ENCODE measurements at regions of chr19 and their contacts with region 1.

Region 1: GRCh38 chr19:49118565-49119410 is at the start of gene C19orf73:
- DNase-seq: peak; percentile 94
- H3K4me3 Mint-ChIP-seq: peak within 1 kb of the TSS; percentile 86
- H3K27ac Mint-ChIP-seq: peak within 1 kb of the TSS; percentile 85
- H3K4me1 Mint-ChIP-seq: peaks cover 34% of the 10 kb centered on the region
- H3K27me3 Mint-ChIP-seq: peaks cover 17% of the 10 kb centered on the region
- total RNA-seq, gene C19orf73: 2.6 and 2.9 TPM in 2 replicates

Region 2: DNA sequence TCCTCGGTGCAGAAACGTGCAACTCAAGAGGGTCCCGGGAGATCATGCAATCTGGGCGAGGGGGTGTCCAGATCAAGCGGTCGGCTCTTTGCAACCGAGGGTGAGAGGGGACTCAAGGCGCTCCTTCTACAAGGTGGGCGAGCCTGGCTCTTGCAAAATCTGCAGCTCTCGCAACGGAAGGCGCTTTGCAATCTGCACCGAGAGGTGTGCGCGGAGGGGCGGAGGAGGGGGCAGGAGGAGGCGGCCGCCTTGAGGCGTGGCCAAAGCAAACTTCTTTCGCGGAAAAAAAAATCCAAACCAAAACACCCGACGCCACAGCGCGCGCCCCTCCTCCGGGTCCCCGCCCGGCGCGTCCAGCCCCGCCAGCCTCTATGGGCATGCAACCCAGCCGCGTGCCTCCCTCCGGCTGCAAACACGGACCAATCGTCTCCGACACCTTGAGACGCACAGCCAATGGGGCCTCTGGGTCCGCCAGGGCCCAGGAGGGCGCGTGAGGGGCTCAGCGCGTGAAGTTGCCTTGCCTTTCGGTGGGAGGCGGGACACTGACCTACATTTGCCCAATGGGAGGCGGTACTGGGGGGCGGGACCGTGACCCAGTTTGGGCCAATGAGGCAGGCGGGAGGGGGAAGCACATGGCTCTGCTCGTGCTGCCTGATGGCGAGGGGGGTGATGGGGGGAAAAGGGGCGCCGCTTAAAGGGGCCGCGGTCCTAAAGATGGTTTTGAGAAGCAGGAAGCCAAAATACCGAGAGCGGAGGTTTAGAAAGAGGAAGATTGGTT is 481.4 kb before region 1 on chr19 and contains the start of gene DBP:
- intact Hi-C with region 1: loop called (anchors 10 kb)
- DNase-seq: peak; percentile 98
- H3K4me3 Mint-ChIP-seq: peak within 1 kb of the TSS; percentile 97
- H3K27ac Mint-ChIP-seq: peak within 1 kb of the TSS; percentile 100
- H3K4me1 Mint-ChIP-seq: peaks cover 29% of the 10 kb centered on the region
- H3K27me3 Mint-ChIP-seq: peaks cover 4% of the 10 kb centered on the region
- total RNA-seq, gene DBP: 8.5 and 9.1 TPM in 2 replicates

Region 3: GRCh38 chr19:48720613-48721296 is 398.0 kb before region 1 on chr19:
- intact Hi-C with region 1: loop called (anchors 10 kb)
- DNase-seq: peak; percentile 91
- H3K4me3 Mint-ChIP-seq: peak overlapping the region; percentile 92
- H3K27ac Mint-ChIP-seq: peak overlapping the region; percentile 98
- H3K4me1 Mint-ChIP-seq: peaks cover 23% of the 10 kb centered on the region
- H3K27me3 Mint-ChIP-seq: no peaks in the 10 kb centered on the region

Region 4: GRCh38 chr19:49085020-49085867 is 33.5 kb before region 1 on chr19 and contains the start of gene SNRNP70:
- intact Hi-C with region 1: loop called (anchors 1 kb)
- DNase-seq: peak; percentile 99
- H3K4me3 Mint-ChIP-seq: peak within 1 kb of the TSS; percentile 99
- H3K27ac Mint-ChIP-seq: peak within 1 kb of the TSS; percentile 80
- H3K4me1 Mint-ChIP-seq: peaks cover 25% of the 10 kb centered on the region
- H3K27me3 Mint-ChIP-seq: peaks cover 2% of the 10 kb centered on the region
- total RNA-seq, gene SNRNP70: 259 and 272 TPM in 2 replicates

Region 5: DNA sequence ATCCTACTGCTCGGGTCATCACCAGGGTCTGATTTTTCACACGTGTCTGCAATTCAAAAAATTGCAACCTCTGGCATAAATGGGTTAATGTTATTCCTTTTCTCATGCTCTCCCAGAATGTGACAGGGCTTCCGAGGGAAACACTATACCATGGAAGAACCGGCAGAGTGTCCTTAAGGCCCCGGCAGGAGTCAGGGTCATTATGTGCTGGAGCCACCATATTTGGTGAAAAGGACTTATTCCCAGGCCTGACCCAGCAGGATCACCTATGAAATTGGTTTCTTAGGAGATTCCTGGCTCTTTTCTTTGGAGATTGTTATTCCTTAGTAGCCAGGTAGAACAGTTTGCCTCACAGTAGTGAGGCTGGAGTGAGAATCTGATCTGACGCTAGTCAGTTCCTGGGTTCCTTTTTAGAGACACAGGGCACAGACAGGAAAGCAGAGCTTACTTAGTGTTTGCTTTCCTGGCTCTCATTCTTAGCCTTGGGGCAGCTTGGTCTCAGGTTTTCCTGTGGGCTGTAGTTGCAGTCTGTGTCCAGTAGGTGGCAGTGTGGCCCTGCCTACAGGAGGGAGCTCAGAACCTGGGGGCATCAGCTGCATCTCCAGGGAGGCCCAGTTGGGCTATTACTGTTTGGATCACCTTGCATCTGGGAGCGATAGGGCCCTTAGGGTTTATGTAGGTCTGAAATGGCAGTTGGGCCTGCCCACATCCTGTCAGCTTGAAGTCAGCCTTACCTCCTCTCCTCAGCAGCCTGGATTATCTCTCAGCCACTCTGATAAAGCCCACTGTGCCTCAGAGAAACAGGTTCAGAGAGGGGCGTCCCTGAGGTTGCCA is 21.1 kb before region 1 on chr19:
- intact Hi-C with region 1: loop called (anchors 1 kb)
- DNase-seq: peak; percentile 68
- H3K4me3 Mint-ChIP-seq: no peak overlapping the region
- H3K27ac Mint-ChIP-seq: no peak overlapping the region
- H3K4me1 Mint-ChIP-seq: peaks cover 15% of the 10 kb centered on the region
- H3K27me3 Mint-ChIP-seq: no peaks in the 10 kb centered on the region

Region 6: GRCh38 chr19:49148784-49149651 is 30.2 kb after region 1 on chr19:
- intact Hi-C with region 1: loop called (anchors 2 kb)
- DNase-seq: peak; percentile 70
- H3K4me3 Mint-ChIP-seq: peak overlapping the region; percentile 78
- H3K27ac Mint-ChIP-seq: no peak overlapping the region
- H3K4me1 Mint-ChIP-seq: peaks cover 35% of the 10 kb centered on the region
- H3K27me3 Mint-ChIP-seq: peaks cover 59% of the 10 kb centered on the region

Region 7: DNA sequence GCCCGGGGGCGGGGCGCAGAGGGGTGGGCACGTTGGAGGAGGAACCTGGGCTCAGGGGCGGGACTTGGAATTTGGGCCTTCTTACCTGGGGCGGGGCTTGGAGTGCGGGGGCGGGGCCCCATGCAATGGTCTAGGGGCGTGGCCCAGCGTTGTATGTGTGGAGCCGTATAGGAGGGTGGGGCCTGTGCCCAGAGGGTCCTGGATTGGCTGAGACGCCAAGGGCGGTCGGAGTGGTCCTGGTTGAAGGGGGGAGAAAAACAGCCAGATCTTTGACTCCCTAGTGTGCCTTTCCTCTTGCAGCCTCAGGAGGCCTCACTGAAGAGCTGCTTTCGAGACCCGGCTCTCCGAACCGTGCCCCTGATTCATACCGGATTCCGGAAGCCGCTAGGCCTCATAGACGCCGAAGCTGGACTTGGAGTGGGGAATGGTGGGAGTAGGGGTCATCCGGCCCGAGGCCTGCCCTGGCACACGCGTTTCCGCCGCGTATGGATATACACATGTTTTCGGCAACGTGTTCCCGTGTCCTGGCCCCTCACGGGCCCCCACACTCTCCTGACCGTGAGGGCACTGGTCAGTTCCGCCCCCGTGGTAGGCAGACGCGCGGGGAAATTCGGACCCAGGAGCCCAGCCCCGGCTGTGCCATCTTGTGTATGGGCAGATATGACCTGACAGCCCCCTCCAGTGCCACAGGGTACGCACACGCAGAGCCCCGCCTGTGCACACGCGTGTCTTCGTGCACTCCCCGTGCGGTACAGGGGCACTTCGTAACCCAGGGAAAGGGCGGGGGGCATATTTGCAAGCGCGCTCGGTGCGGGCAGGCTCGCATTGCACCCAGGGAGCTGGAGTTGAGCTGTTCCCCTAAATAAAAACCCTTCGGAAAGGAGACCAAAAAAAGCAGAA is 471.5 kb after region 1 on chr19:
- intact Hi-C with region 1: loop called (anchors 2 kb)
- DNase-seq: peak; percentile 93
- H3K4me3 Mint-ChIP-seq: peak overlapping the region; percentile 88
- H3K27ac Mint-ChIP-seq: peak overlapping the region; percentile 84
- H3K4me1 Mint-ChIP-seq: peaks cover 40% of the 10 kb centered on the region
- H3K27me3 Mint-ChIP-seq: peaks cover 10% of the 10 kb centered on the region

Region 8: DNA sequence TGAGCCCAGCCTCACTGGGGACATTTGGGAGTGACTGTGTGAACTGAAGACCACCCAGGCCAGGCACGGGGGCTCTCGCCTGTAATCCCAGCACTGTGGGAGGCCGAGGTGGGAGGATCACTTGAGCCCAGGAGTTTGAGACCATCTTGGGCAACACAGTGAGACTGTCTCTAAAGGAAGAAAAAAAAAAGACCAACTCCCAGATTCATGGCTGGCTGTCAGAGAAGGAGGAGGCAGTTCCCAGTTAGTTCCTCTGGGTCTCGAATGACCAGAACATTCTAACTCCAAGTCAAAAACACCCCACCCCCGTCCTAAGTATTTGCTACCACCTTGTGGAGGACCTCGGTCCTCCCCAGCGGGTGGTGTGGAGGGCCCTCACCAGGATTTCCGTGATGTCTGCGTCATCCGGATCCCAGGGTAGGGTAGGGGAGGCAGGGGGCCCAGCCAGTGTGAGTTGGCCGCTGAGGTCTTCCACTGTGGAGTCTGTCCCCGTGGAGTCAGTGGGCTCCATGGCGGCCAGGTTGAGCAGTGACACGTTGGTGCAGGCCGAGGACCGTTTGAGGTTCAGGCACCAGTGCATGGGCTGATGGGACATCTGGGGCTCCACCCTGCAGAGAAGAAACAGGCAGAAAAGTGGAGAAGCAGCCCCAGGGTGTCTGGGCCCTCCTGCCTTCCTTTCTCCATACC is 643.0 kb after region 1 on chr19:
- intact Hi-C with region 1: no loop called
- DNase-seq: peak; percentile 5
- H3K4me3 Mint-ChIP-seq: peak overlapping the region; percentile 46
- H3K27ac Mint-ChIP-seq: peak overlapping the region; percentile 73
- H3K4me1 Mint-ChIP-seq: peaks cover 8% of the 10 kb centered on the region
- H3K27me3 Mint-ChIP-seq: peaks cover 2% of the 10 kb centered on the region

Measured in activated T-helper 1 cell treated with anti-CD3 and anti-CD28 coated beads, Interleukin-12 subunit alpha, Interleukin-12 subunit beta, Interleukin-2, Interleukin-4 antibody, amounts not matched to agents 30 ng/mL and 10 ng/mL and 1 ng/mL, durations not matched to agents 14 hours and 24 hours and 36 hours (primary cell).